ENCODE measurements at regions of chr11 and their contacts with region 1.

Region 1: GRCh38 chr11:87892291-87892690 is 283.0 kb downstream of the RAB38 start:
- DNase-seq: no peak
- H3K4me3 ChIP-seq: no peak overlapping the region
- H3K27me3 ChIP-seq: no peaks in the 10 kb centered on the region
- CTCF ChIP-seq: no peak

Region 2: GRCh38 chr11:87878373-87878779 is 13.9 kb before region 1 on chr11:
- CTCF ChIA-PET with region 1: interaction called, 11 read pairs
- POLR2A ChIA-PET with region 1: no interaction called
- DNase-seq: peak; percentile 79
- H3K4me3 ChIP-seq: no peak overlapping the region
- H3K27me3 ChIP-seq: no peaks in the 10 kb centered on the region
- CTCF ChIP-seq: peak; percentile 71

Measured in BJ (cell line).